GM12878 (cell line): ENCODE measurements at regions of chr5 and their contacts with region 1.

Region 1: DNA sequence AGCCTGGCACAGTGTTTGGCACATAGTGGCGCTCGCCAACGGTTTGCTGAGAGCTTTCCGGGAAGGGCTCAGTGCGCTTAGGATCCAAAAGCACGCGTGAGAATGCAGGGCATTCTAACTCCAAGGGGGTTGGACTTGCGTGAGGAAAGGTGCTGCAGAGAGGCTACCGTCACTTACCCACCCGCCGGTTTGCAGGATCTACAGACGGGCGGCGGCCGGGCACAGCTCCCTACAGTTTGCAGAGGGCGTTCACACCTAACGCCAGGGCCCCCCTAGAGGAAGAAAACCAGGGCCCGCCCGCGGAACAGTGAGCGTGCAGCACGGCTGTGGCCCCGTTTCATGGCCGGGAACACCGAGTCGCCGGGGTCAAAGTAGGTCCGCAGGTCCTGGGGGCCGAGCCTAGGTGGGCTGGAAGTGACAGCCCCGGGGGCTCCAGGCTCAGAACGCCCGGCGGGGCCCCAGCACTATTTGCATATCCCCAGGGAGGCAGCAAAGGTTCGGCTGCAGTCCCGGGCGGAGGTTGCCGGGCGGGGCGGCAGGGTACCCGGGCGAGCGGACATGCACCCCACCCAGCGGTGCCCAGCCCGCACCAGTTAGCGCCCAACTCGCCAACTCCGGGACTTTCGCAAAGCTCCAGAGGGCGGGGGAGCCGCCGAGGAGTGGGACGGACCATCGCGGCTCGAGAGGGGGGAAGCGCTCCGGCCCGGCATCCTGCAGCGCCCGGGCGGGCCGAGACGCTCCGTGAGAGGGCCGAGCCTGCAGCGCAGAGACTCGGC is 526 bp upstream of the GALNT10 start:
- DNase-seq: no peak
- ATAC-seq: peak; percentile 84
- H3K4me3 ChIP-seq: peak overlapping the region; percentile 82
- H3K27ac ChIP-seq: peak overlapping the region; percentile 65
- H3K4me1 ChIP-seq: peaks cover 8% of the 10 kb centered on the region
- H3K27me3 ChIP-seq: peaks cover 0 to 4% of the 10 kb centered on the region in 2 experiments; a peak in 1 of 4 replicates
- CTCF ChIP-seq: peak; percentile 26 to 44 (median 43); a peak in 5 of 6 replicates
- EP300 ChIP-seq: no peak
- POLR2A ChIP-seq: 0 out of 2 replicates have a peak, but pooled peaks have one; percentile 45
- RAD21 ChIP-seq: no peak

Region 2: GRCh38 chr5:154058055-154059038 is 131.7 kb before region 1 on chr5:
- CTCF ChIA-PET with region 1: no interaction called
- POLR2A ChIA-PET with region 1: no interaction called
- RAD21 ChIA-PET with region 1: no interaction called
- SMC1A ChIA-PET with region 1: interaction called, 3 read pairs
- in situ Hi-C with region 1: loop called (anchors 10 kb)
- intact Hi-C with region 1: no loop called
- DNase-seq: peak; percentile 63
- ATAC-seq: peak; percentile 88
- H3K4me3 ChIP-seq: no peak overlapping the region
- H3K27ac ChIP-seq: peak overlapping the region; percentile 52
- H3K4me1 ChIP-seq: peaks cover 23% of the 10 kb centered on the region
- H3K27me3 ChIP-seq: no peaks in the 10 kb centered on the region
- CTCF ChIP-seq: no peak
- EP300 ChIP-seq: no peak
- POLR2A ChIP-seq: no peak
- RAD21 ChIP-seq: no peak

Region 3: DNA sequence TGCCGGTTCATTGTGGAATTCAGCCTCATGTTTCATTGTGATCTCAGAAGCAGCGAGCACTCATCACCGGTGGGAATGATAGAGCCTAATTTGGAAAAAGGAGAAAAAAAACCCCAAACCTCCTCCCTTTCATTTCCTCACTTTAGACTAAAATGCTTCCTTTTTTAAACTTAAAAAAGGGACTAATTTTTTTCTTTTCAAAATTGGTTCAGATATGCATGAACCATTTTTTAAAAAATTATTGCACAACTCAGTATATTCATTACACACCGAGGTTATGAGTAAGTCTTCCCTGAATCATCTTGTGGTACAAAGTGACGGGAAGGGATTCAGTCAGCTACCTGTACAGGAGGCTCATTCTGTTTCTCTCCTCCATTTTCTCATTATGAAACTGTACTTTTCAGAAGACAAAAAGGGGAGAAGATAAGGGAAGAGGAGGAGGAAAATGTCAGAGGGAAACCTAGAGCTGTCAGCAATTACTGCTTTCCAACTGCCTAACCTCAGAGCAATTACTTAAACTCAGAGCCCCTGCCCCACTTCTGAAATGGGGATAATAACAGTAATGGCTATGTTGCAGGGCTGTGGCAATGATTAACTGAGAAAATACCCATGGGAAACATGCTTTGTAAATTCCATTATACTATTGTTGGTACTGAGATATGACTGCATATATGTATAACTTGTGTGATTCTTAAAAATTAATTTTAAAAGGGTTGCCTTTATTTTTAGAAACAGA is 24.5 kb after region 1 on chr5:
- CTCF ChIA-PET with region 1: interaction called, 3 read pairs
- POLR2A ChIA-PET with region 1: interaction called, 3 read pairs
- RAD21 ChIA-PET with region 1: interaction called, 4 read pairs
- SMC1A ChIA-PET with region 1: interaction called, 10 read pairs
- in situ Hi-C with region 1: no loop called
- intact Hi-C with region 1: no loop called
- DNase-seq: no peak
- ATAC-seq: peak; percentile 85
- H3K4me3 ChIP-seq: 0 out of 2 replicates have a peak overlapping the region, but pooled peaks have one; percentile 3
- H3K27ac ChIP-seq: peak overlapping the region; percentile 37
- H3K4me1 ChIP-seq: peaks cover 10% of the 10 kb centered on the region
- H3K27me3 ChIP-seq: no peaks in the 10 kb centered on the region
- CTCF ChIP-seq: no peak
- EP300 ChIP-seq: peak in 1 of 2 experiments; percentile 27; a peak in 1 of 4 replicates
- POLR2A ChIP-seq: no peak
- RAD21 ChIP-seq: no peak

Region 4: DNA sequence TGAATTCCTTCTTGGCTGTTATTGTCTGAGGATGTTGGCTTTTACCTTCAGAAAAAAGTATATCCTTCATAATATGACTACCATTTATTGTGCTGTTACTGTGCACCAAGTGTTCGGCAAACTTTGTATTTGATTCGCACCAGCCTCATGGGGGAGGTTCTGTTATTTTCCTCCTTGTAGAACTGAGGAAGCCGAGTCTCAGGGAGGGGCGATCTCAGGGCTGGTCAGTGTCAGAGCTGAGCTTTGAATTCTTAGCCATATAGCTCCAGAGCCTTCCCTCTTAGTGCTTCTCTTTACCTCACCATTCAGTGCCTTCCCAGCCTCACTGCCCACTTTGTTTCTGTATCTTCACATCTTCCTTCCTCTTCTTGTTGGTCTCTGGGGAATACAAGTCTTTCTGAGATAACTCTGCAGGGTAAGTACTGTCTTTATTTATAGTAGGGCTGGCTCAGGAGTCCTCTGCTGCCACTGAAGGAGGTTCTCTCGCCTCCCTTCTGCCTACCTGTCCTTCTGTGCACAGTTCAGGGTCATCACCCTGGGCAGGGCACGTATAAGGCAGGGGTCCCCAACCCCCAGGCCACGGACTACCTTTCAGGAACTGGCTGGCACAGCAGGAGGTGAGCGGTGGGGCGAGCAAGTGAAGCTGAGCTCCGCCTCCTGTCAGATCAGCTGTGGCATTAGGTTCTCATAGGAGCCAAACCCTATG is 48.9 kb after region 1 on chr5:
- CTCF ChIA-PET with region 1: interaction called, 52 read pairs
- POLR2A ChIA-PET with region 1: interaction called, 3 read pairs
- RAD21 ChIA-PET with region 1: interaction called, 18 read pairs
- SMC1A ChIA-PET with region 1: interaction called, 97 read pairs
- in situ Hi-C with region 1: no loop called
- intact Hi-C with region 1: no loop called
- DNase-seq: peak; percentile 63
- ATAC-seq: peak; percentile 76
- H3K4me3 ChIP-seq: no peak overlapping the region
- H3K27ac ChIP-seq: peak overlapping the region; percentile 57
- H3K4me1 ChIP-seq: peaks cover 59% of the 10 kb centered on the region
- H3K27me3 ChIP-seq: no peaks in the 10 kb centered on the region
- CTCF ChIP-seq: no peak
- EP300 ChIP-seq: no peak
- POLR2A ChIP-seq: no peak
- RAD21 ChIP-seq: no peak

Region 5: GRCh38 chr5:154384480-154385235 is 194.7 kb after region 1 on chr5:
- CTCF ChIA-PET with region 1: interaction called, 9 read pairs
- POLR2A ChIA-PET with region 1: interaction called, 9 read pairs
- RAD21 ChIA-PET with region 1: interaction called, 12 read pairs
- SMC1A ChIA-PET with region 1: interaction called, 3 read pairs
- in situ Hi-C with region 1: no loop called
- intact Hi-C with region 1: loop called (anchors 2 kb)
- DNase-seq: peak; percentile 99
- ATAC-seq: peak; percentile 97
- H3K4me3 ChIP-seq: no peak overlapping the region
- H3K27ac ChIP-seq: peak overlapping the region; percentile 95
- H3K4me1 ChIP-seq: peaks cover 16% of the 10 kb centered on the region
- H3K27me3 ChIP-seq: no peaks in the 10 kb centered on the region
- CTCF ChIP-seq: no peak
- EP300 ChIP-seq: peak; percentile 83 to 90
- POLR2A ChIP-seq: no peak
- RAD21 ChIP-seq: peak; percentile 23; the same call in 1 of the 2 replicates